GM23248 (cell line): ENCODE measurements at regions of chr19 and their contacts with region 1.

Region 1: GRCh38 chr19:47707135-47707925 is 5.9 kb upstream of the EHD2 start:
- DNase-seq: peak; percentile 86
- H3K4me3 ChIP-seq: no peak overlapping the region
- H3K27ac ChIP-seq: no peak overlapping the region
- H3K4me1 ChIP-seq: no peaks in the 10 kb centered on the region
- H3K27me3 ChIP-seq: no peaks in the 10 kb centered on the region

Region 2: DNA sequence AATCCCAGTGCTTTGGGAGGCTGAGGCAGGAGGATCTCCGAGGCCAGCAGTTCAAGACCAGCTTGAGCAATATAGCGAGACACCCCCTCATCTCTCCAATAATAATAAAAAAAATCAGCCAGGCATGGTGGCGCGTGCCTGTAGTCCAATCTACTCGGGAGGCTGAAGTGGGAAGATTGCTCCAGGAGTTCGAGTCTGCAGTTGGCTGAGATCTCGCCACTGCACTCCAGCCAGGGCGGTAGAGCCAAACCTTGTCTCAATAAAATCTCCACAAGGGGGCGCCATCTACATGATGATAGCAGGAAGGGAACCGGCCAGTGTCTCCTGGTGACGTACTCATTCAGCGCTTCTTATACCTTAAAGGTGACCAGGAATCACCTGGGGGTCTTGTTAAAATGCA is 411.3 kb before region 1 on chr19:
- in situ Hi-C with region 1: loop called (anchors 10 kb)
- DNase-seq: peak; percentile 89
- H3K4me3 ChIP-seq: no peak overlapping the region
- H3K27ac ChIP-seq: no peak overlapping the region
- H3K4me1 ChIP-seq: no peaks in the 10 kb centered on the region
- H3K27me3 ChIP-seq: no peaks in the 10 kb centered on the region

Region 3: DNA sequence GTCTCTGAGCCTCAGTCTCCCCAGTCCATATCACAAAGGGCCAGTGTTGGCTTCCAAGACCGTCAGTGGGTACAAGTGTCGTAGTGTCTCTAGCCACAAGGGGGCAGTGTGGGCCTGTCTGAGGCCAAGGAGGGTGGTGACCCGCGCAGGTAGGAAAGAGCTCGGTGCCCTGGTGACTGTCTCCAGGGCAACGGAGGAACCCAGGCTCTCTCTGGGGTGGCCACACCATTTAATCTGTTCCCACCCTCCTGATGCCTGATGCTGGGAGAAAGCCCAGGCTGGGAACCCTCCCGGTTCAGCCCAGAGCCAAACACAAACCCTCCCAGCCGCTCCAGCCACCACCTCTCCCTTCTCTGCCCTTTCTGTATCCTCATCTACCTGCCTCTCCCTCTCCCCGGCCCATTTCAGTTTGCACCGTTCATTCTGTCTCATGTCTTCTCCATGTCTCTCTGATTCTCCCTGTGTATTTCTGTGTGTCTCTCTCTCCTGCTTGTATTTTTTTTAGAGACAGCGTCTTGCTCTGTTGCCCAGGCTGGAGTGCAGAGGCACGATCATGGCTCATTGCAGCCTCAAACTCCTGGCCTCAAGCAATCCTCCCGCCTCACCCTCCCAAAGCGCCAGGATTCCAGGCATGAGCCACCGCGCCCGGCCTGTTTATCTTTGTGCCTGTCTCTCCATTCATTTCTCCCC is 270.5 kb before region 1 on chr19:
- in situ Hi-C with region 1: loop called (anchors 5 kb)
- DNase-seq: peak; percentile 70
- H3K4me3 ChIP-seq: no peak overlapping the region
- H3K27ac ChIP-seq: no peak overlapping the region
- H3K4me1 ChIP-seq: no peaks in the 10 kb centered on the region
- H3K27me3 ChIP-seq: no peaks in the 10 kb centered on the region

Region 4: DNA sequence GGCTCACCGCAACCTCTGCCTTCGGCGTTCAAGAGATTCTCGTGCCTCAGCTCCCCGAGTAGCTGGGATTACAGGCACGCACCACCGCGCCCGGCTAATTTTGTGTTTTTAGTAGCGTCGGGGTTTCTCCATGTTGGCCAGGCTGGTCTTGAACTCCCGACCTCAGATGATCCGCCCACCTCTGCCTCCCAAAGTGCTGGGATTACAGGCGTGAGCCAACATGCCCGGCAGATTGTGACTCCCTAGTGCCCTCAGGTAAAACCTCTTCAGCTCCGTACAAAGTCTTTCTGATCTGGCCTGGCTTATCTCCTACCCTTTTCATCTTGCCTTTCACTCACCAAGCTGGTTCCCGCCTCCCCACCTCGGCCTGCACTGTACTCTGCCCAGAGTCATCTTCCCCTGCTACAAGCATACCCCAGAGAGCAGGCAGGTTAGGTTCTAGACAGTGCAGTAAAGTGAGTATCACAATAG is 83.4 kb before region 1 on chr19:
- in situ Hi-C with region 1: no loop called
- DNase-seq: no peak
- H3K4me3 ChIP-seq: no peak overlapping the region
- H3K27ac ChIP-seq: no peak overlapping the region
- H3K4me1 ChIP-seq: no peaks in the 10 kb centered on the region
- H3K27me3 ChIP-seq: no peaks in the 10 kb centered on the region

Region 5: DNA sequence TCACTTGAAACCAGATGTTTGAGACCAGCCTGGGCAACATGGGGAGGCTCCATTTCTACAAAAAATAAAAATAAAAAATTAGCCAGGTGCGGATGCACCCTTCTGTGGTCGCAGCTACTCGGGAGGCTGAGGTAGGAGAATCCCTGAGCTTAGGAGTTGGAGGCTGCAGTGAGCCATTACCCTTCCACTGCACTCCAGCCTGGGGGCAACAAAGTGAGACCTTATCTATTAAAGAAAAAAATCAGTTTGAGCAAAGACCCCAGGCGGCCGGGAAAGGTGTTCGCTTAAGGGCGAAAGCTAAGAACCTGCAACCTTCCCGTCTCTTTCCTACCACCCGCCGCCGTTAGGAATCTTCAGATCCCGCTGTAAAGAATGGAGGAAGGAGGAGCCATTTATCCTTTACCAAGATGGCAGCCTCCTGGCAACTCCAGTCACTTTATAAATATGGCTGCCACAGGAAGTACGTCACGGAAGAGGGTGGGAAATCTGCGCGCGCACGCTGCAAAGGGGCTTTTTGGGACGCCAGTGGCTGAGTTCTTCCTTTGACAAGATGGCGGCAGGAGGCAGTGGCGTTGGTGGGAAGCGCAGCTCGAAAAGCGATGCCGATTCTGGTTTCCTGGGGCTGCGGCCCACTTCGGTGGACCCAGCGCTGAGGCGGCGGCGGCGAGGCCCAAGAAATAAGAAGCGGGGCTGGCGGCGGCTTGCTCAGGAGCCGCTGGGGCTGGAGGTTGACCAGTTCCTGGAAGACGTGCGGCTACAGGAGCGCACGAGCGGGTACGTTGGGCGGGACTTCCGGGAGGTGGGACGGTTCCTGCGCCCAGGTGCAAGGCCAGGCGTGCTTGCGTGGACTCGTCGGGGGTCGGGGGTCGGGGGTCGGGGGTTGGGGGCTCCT is 37.9 kb after region 1 on chr19 and contains the start of gene NOP53:
- in situ Hi-C with region 1: no loop called
- DNase-seq: peak; percentile 97
- H3K4me3 ChIP-seq: peak within 1 kb of the TSS; percentile 83
- H3K27ac ChIP-seq: peak within 1 kb of the TSS; percentile 98
- H3K4me1 ChIP-seq: peaks cover 27% of the 10 kb centered on the region
- H3K27me3 ChIP-seq: no peaks in the 10 kb centered on the region
- total RNA-seq, gene NOP53: 58.3 and 62.8 TPM in 2 replicates